ENCODE measurements at regions of chr16 and their contacts with region 1.

Region 1: DNA sequence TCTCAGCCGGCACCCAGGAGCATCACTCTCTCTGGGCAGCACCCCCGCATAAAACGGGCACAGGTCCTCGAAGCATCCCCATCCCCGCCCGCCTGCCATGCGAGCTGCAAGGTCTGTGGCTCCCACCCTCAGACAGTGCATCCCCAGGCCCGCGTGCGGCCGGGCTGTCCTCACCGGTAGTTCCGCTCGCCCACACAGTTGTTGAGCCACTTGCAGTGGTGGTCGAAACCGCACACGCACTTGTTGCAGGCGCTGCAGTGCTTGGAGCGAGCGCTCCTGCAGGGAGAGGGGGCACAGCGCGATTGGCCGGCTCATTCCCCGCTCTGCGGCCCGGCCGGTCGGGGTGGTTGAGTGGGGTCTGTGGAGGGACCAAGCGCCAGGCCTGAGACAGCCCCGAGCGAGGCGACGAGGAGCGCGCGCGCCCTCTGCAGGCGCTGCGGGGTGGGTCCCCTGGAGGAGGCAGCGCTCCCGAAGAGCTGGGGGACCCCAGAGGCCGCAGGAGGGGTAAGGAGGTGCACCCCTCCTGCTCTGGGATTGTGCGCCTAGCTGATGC is 6.0 kb upstream of the TPPP3 start:
- DNase-seq: peak; percentile 42 to 66 (median 62)
- H3K4me3 ChIP-seq: no peak overlapping the region
- H3K27ac ChIP-seq: no peak overlapping the region
- H3K4me1 ChIP-seq: peaks cover 0 to 24% (median 19%) of the 10 kb centered on the region in 4 experiments
- H3K27me3 ChIP-seq: peaks cover 0 to 23% (median 11%) of the 10 kb centered on the region in 5 experiments

Region 2: DNA sequence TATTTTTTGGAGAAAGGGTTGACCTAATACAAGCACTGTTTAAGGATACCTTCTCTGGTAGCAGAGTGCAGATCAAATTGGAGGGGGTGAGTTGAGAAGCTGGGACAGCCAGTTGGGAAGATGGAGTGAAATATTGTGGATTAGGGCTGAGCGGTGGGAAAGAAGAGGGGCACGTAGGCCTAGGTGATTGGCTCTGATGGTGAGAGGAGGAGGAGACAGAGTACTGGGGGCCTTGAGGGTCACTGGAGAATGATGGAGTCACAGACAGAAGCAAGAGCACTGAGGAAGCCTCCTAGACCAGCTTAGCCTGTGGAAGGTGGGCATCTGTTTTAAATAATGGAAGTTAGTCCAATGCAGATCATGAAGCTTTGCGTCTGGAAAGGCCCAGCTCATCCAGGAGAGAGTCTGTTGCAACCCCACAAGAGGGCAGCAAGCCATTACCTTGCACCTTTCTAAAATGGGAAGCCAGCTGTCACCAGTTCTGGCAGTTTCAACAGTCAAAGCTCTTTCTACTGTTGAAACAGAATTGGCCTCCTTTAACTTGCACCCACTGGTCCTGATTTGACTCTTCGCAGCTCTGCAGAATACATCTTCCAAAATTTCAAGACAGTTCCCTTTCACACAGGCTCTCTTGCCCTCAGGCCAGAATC is 138.7 kb before region 1 on chr16:
- CTCF ChIA-PET with region 1: interaction called, 25 read pairs
- POLR2A ChIA-PET with region 1: no interaction called
- DNase-seq: peak; percentile 63 to 83 (median 80)
- H3K4me3 ChIP-seq: no peak overlapping the region
- H3K27ac ChIP-seq: no peak overlapping the region
- H3K4me1 ChIP-seq: peaks cover 0 to 3% (median 0%) of the 10 kb centered on the region in 4 experiments
- H3K27me3 ChIP-seq: peaks cover 0 to 3% (median 0%) of the 10 kb centered on the region in 5 experiments

Region 3: GRCh38 chr16:67280090-67281015 is 118.9 kb before region 1 on chr16:
- CTCF ChIA-PET with region 1: interaction called, 10 read pairs
- POLR2A ChIA-PET with region 1: no interaction called
- DNase-seq: no peak
- H3K4me3 ChIP-seq: peak overlapping the region in 1 of 7 experiments; percentile 76
- H3K27ac ChIP-seq: no peak overlapping the region
- H3K4me1 ChIP-seq: peaks cover 0 to 21% (median 20%) of the 10 kb centered on the region in 4 experiments
- H3K27me3 ChIP-seq: no peaks in the 10 kb centered on the region

Region 4: GRCh38 chr16:67356396-67356795 is 42.9 kb before region 1 on chr16:
- CTCF ChIA-PET with region 1: interaction called, 17 read pairs
- POLR2A ChIA-PET with region 1: no interaction called
- DNase-seq: no peak
- H3K4me3 ChIP-seq: no peak overlapping the region
- H3K27ac ChIP-seq: no peak overlapping the region
- H3K4me1 ChIP-seq: peaks cover 0 to 12% (median 4%) of the 10 kb centered on the region in 4 experiments
- H3K27me3 ChIP-seq: no peaks in the 10 kb centered on the region

Region 5: DNA sequence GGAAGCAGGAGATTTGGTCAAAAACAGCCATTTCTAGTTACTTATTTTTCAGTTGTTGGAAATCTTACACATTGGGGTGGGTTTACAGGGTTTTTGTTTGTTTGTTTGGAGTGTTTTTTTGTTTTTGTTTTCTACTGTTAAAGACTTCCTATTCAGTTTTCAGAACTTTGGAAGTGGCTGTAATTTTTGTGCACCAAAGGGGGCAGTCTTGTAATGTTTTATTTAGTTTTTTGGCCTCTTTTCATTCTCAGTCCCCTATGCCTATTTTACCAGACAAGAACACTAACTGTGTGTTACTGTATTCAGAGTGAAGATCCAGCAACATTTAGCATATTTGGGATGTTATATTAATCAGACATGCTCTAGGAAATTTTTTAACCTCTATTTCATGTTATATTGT is 26.6 kb before region 1 on chr16:
- CTCF ChIA-PET with region 1: interaction called, 14 read pairs
- POLR2A ChIA-PET with region 1: no interaction called
- DNase-seq: peak in 2 of 3 donors; percentile 57 to 65
- H3K4me3 ChIP-seq: no peak overlapping the region
- H3K27ac ChIP-seq: no peak overlapping the region
- H3K4me1 ChIP-seq: no peaks in the 10 kb centered on the region
- H3K27me3 ChIP-seq: peaks cover 0 to 3% (median 0%) of the 10 kb centered on the region in 5 experiments

Region 6: GRCh38 chr16:67384778-67385510 is 14.3 kb before region 1 on chr16:
- CTCF ChIA-PET with region 1: interaction called, 40 read pairs
- POLR2A ChIA-PET with region 1: no interaction called
- DNase-seq: no peak
- H3K4me3 ChIP-seq: no peak overlapping the region
- H3K27ac ChIP-seq: no peak overlapping the region
- H3K4me1 ChIP-seq: peaks cover 0 to 5% (median 4%) of the 10 kb centered on the region in 4 experiments
- H3K27me3 ChIP-seq: peaks cover 0 to 5% (median 0%) of the 10 kb centered on the region in 5 experiments

Region 7: GRCh38 chr16:67415872-67416793 is 16.9 kb after region 1 on chr16 and contains the start of gene ZDHHC1:
- CTCF ChIA-PET with region 1: interaction called, 15 read pairs
- POLR2A ChIA-PET with region 1: no interaction called
- DNase-seq: peak; percentile 49 to 66 (median 63)
- H3K4me3 ChIP-seq: peak within 1 kb of the TSS; percentile 55 to 79 (median 70)
- H3K27ac ChIP-seq: peak within 1 kb of the TSS; percentile 15 to 66
- H3K4me1 ChIP-seq: peaks cover 0 to 14% (median 12%) of the 10 kb centered on the region in 4 experiments
- H3K27me3 ChIP-seq: peaks cover 0 to 1% (median 0%) of the 10 kb centered on the region in 5 experiments

Measured in common myeloid progenitor, CD34-positive (primary cell).